ENCODE measurements at regions of chr9 and their contacts with region 1.

Region 1: GRCh38 chr9:123349691-123350480 is 6.1 kb upstream of the CRB2 start:
- DNase-seq: peak; percentile 27 to 60 (median 49)
- H3K4me3 ChIP-seq: no peak overlapping the region
- H3K4me3 Mint-ChIP-seq: no peak overlapping the region
- H3K27ac ChIP-seq: no peak overlapping the region
- H3K27ac Mint-ChIP-seq: no peak overlapping the region
- H3K4me1 ChIP-seq: peaks cover 0 to 4% of the 10 kb centered on the region in 2 donors
- H3K4me1 Mint-ChIP-seq: peaks cover 8% of the 10 kb centered on the region
- H3K27me3 ChIP-seq: no peaks in the 10 kb centered on the region
- H3K27me3 Mint-ChIP-seq: peaks cover 8 to 10% (median 10%) of the 10 kb centered on the region in 3 donors
- CTCF ChIP-seq: peak; percentile 97

Region 2: GRCh38 chr9:123081824-123082223 is 268.1 kb before region 1 on chr9:
- intact Hi-C with region 1: loop called (anchors 2 to 5 kb)
- DNase-seq: peak in 1 of 3 donors; percentile 0
- H3K4me3 ChIP-seq: no peak overlapping the region
- H3K4me3 Mint-ChIP-seq: no peak overlapping the region
- H3K27ac ChIP-seq: no peak overlapping the region
- H3K27ac Mint-ChIP-seq: no peak overlapping the region
- H3K4me1 ChIP-seq: no peaks in the 10 kb centered on the region
- H3K4me1 Mint-ChIP-seq: no peaks in the 10 kb centered on the region
- H3K27me3 ChIP-seq: no peaks in the 10 kb centered on the region
- H3K27me3 Mint-ChIP-seq: no peaks in the 10 kb centered on the region
- CTCF ChIP-seq: peak; percentile 51

Region 3: DNA sequence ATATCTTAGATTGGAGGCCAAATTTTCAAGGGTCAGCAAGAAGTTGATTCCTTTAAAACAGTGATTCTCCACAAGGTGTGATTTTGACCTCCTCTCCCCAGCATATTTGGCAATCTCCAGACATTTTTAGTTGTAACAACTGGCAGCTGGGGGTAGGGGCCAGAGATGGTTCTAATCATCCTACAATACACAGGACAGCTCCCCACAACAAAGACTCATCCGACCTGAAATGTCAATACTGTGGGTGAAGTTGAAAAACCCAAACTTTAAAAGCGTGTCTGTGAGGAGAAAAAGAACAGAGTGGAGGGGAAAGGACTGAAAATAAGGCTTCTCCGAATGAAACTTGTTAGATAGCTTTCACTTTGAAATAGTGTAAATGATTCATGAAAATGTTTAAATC is 71.5 kb before region 1 on chr9:
- intact Hi-C with region 1: loop called in 1 of 2 experiments (anchors 10 kb)
- DNase-seq: no peak
- H3K4me3 ChIP-seq: no peak overlapping the region
- H3K4me3 Mint-ChIP-seq: no peak overlapping the region
- H3K27ac ChIP-seq: no peak overlapping the region
- H3K27ac Mint-ChIP-seq: no peak overlapping the region
- H3K4me1 ChIP-seq: no peaks in the 10 kb centered on the region
- H3K4me1 Mint-ChIP-seq: peaks cover 4% of the 10 kb centered on the region
- H3K27me3 ChIP-seq: peaks cover 0 to 4% of the 10 kb centered on the region in 2 donors
- H3K27me3 Mint-ChIP-seq: peaks cover 0 to 4% (median 1%) of the 10 kb centered on the region in 3 donors
- CTCF ChIP-seq: no peak